Endothelial cell of umbilical vein (primary cell): ENCODE measurements at regions of chr11 and their contacts with region 1.

Region 1: GRCh38 chr11:64803163-64803845 is at the start of gene MAP4K2:
- DNase-seq: peak; percentile 74
- H3K4me3 ChIP-seq: peak within 1 kb of the TSS; percentile 59 to 87 (median 70)
- H3K27ac ChIP-seq: peak within 1 kb of the TSS; percentile 75
- H3K4me1 ChIP-seq: peaks cover 36% of the 10 kb centered on the region
- H3K27me3 ChIP-seq: no peaks in the 10 kb centered on the region
- CTCF ChIP-seq: peak; percentile 5 to 28
- POLR2A ChIP-seq: no peak
- total RNA-seq, gene MAP4K2: 43.3 and 48.5 TPM in 2 replicates

Region 2: DNA sequence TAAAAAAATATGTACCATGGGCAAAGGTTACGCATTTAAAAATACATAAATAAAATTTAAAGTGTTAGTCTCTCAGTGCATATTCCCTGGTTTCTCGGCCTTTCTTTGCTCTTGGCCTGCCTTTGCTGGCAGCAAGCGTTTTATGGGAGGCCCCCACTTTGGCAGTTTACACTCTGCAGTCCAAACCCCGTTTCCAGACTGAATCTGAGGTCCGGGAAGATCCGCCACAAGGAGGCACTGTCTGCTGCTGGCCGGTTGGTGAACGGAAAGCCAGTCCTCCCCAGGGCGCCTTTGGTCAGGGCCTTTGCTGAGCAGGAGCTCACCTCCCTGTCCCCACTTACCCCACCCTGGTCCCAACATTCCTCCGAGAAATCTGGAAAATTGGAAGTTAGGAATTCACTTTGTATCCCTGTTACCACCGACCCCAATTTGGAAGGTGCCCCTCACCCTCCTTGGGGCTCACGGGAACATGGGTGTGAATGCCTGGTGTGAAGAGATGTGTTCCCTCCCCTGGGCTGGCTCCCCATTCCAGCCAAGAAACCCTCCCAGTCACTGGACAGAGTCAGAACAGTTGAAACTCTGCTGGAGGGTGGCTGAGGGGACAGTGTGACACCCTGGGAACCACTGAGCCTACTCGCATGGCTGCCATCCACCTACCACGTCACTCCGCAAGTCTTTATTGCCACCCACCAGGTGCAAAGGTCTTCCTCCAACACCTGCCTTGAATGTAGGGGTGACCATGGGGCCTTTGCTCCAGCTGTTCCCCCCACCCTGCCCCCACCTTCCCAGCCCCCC is 15.6 kb before region 1 on chr11:
- CTCF ChIA-PET with region 1: interaction called, 32 read pairs
- POLR2A ChIA-PET with region 1: no interaction called
- dilution Hi-C with region 1: no loop called
- intact Hi-C with region 1: loop called (anchors 2 kb)
- DNase-seq: peak; percentile 52
- H3K4me3 ChIP-seq: no peak overlapping the region
- H3K27ac ChIP-seq: no peak overlapping the region
- H3K4me1 ChIP-seq: no peaks in the 10 kb centered on the region
- H3K27me3 ChIP-seq: no peaks in the 10 kb centered on the region
- CTCF ChIP-seq: peak; percentile 83 to 89
- POLR2A ChIP-seq: no peak